GM12878 (cell line): ENCODE measurements at regions of chrX and their contacts with region 1.

Region 1: GRCh38 chrX:15686818-15687685 is 22.4 kb upstream of the CLTRN start:
- DNase-seq: peak; percentile 34
- ATAC-seq: peak; percentile 97
- H3K4me3 ChIP-seq: no peak overlapping the region
- H3K27ac ChIP-seq: no peak overlapping the region
- H3K4me1 ChIP-seq: no peaks in the 10 kb centered on the region
- H3K27me3 ChIP-seq: no peaks in the 10 kb centered on the region
- CTCF ChIP-seq: peak; percentile 85
- EP300 ChIP-seq: no peak
- POLR2A ChIP-seq: no peak
- RAD21 ChIP-seq: peak; percentile 74

Region 2: GRCh38 chrX:15973299-15973698 is 286.2 kb after region 1 on chrX:
- CTCF ChIA-PET with region 1: no interaction called
- POLR2A ChIA-PET with region 1: no interaction called
- RAD21 ChIA-PET with region 1: no interaction called
- SMC1A ChIA-PET with region 1: no interaction called
- in situ Hi-C with region 1: no loop called
- intact Hi-C with region 1: loop called (anchors 5 kb)
- DNase-seq: peak; percentile 26
- ATAC-seq: peak; percentile 98
- H3K4me3 ChIP-seq: no peak overlapping the region
- H3K27ac ChIP-seq: no peak overlapping the region
- H3K4me1 ChIP-seq: no peaks in the 10 kb centered on the region; the same call in 1 of the 2 replicates
- H3K27me3 ChIP-seq: no peaks in the 10 kb centered on the region
- CTCF ChIP-seq: peak; percentile 71 to 81 (median 79)
- EP300 ChIP-seq: no peak
- POLR2A ChIP-seq: no peak
- RAD21 ChIP-seq: peak; percentile 86

Region 3: DNA sequence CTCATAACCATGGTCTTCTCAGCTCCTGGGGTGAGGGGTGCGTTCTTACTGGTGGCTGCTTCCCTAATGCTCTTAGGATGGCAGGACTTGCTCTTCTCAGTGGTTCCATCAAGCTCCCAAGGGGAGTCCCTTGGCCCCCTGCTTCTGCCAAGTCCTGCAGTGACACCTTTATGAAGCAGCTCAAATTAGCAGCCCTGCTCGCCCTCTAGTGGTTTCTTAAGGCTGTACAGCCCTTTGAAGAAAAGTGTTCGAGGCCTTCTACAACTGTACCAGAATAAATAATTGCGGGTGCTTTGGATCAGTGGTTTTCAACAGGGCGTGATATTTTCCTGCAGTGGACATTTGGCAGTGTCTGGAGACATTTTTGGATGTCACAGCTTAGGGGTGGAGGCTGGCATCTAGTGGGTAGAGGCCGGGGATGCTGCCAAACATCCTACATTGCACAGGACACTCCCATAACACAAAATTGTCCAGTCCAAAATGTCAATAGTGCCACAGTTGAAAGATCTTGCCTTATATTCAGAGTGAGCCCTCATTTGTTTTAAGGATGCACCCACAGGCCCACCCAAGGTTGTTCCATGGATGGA is 758.2 kb after region 1 on chrX:
- CTCF ChIA-PET with region 1: no interaction called
- POLR2A ChIA-PET with region 1: no interaction called
- RAD21 ChIA-PET with region 1: no interaction called
- SMC1A ChIA-PET with region 1: interaction called, 3 read pairs
- in situ Hi-C with region 1: no loop called
- intact Hi-C with region 1: loop called (anchors 2 kb)
- DNase-seq: no peak
- ATAC-seq: peak; percentile 96
- H3K4me3 ChIP-seq: no peak overlapping the region
- H3K27ac ChIP-seq: no peak overlapping the region
- H3K4me1 ChIP-seq: no peaks in the 10 kb centered on the region
- H3K27me3 ChIP-seq: no peaks in the 10 kb centered on the region; a peak in 2 of 4 replicates
- CTCF ChIP-seq: peak; percentile 73 to 89 (median 74)
- EP300 ChIP-seq: no peak
- POLR2A ChIP-seq: no peak
- RAD21 ChIP-seq: peak; percentile 72

Region 4: GRCh38 chrX:16705370-16705769 is 1018.3 kb after region 1 on chrX:
- CTCF ChIA-PET with region 1: no interaction called
- POLR2A ChIA-PET with region 1: no interaction called
- RAD21 ChIA-PET with region 1: no interaction called
- SMC1A ChIA-PET with region 1: no interaction called
- in situ Hi-C with region 1: loop called (anchors 10 kb)
- intact Hi-C with region 1: no loop called
- DNase-seq: no peak
- ATAC-seq: no peak
- H3K4me3 ChIP-seq: no peak overlapping the region
- H3K27ac ChIP-seq: no peak overlapping the region
- H3K4me1 ChIP-seq: no peaks in the 10 kb centered on the region
- H3K27me3 ChIP-seq: no peaks in the 10 kb centered on the region
- CTCF ChIP-seq: no peak
- EP300 ChIP-seq: no peak
- POLR2A ChIP-seq: no peak
- RAD21 ChIP-seq: no peak